ENCODE measurements at regions of chr14 and their contacts with region 1.

Region 1: DNA sequence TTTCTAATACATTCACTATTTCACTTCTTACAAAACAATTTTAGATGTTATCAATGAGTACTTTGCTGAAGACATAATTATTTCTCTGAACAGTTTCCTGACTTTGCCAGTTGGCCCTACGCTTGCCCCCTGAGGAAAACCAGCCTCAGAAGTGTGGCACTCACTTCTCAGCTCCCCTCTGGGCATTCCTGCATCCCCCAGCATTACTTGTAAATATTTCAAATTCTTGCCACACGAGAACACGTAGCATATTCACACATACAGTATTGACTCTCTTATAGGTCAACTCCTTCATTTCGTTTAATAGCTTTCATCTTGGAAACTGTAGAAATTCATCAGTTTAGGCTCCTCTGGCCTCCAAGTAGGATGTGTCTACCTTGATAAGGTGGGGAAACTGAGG is 65.2 kb downstream of the OTX2 start:
- DNase-seq: no peak
- ATAC-seq: no peak
- H3K4me3 ChIP-seq: no peak overlapping the region
- H3K4me3 Mint-ChIP-seq: no peak overlapping the region
- H3K27ac ChIP-seq: no peak overlapping the region
- H3K27ac Mint-ChIP-seq: no peak overlapping the region
- H3K4me1 ChIP-seq: no peaks in the 10 kb centered on the region
- H3K4me1 Mint-ChIP-seq: no peaks in the 10 kb centered on the region
- H3K27me3 ChIP-seq: no peaks in the 10 kb centered on the region
- H3K27me3 Mint-ChIP-seq: peaks cover 12 to 17% of the 10 kb centered on the region in 2 donors

Region 2: GRCh38 chr14:55102141-55102621 is 1642.9 kb before region 1 on chr14:
- CTCF ChIA-PET with region 1: interaction called in 1 of 2 experiments, 11 read pairs
- POLR2A ChIA-PET with region 1: no interaction called
- DNase-seq: peak in 33 of 35 experiments; percentile 4 to 72 (median 30)
- ATAC-seq: peak; percentile 68 to 76 (median 70)
- H3K4me3 ChIP-seq: no peak overlapping the region
- H3K4me3 Mint-ChIP-seq: peak overlapping the region; percentile 14 to 73 (median 65)
- H3K27ac ChIP-seq: peak overlapping the region; percentile 91
- H3K27ac Mint-ChIP-seq: peak overlapping the region; percentile 99 to 100
- H3K4me1 ChIP-seq: peaks cover 6 to 56% of the 10 kb centered on the region in 2 experiments
- H3K4me1 Mint-ChIP-seq: peaks cover 36 to 64% (median 52%) of the 10 kb centered on the region in 3 donors
- H3K27me3 ChIP-seq: no peaks in the 10 kb centered on the region
- H3K27me3 Mint-ChIP-seq: no peaks in the 10 kb centered on the region

Region 3: GRCh38 chr14:56686416-56686815 is 58.7 kb before region 1 on chr14:
- CTCF ChIA-PET with region 1: interaction called in 1 of 2 experiments, 10 read pairs
- POLR2A ChIA-PET with region 1: no interaction called
- DNase-seq: no peak
- ATAC-seq: no peak
- H3K4me3 ChIP-seq: no peak overlapping the region
- H3K4me3 Mint-ChIP-seq: no peak overlapping the region
- H3K27ac ChIP-seq: no peak overlapping the region
- H3K27ac Mint-ChIP-seq: no peak overlapping the region
- H3K4me1 ChIP-seq: no peaks in the 10 kb centered on the region
- H3K4me1 Mint-ChIP-seq: no peaks in the 10 kb centered on the region
- H3K27me3 ChIP-seq: no peaks in the 10 kb centered on the region
- H3K27me3 Mint-ChIP-seq: no peaks in the 10 kb centered on the region